ENCODE measurements at regions of chr7 and their contacts with region 1.

Region 1: DNA sequence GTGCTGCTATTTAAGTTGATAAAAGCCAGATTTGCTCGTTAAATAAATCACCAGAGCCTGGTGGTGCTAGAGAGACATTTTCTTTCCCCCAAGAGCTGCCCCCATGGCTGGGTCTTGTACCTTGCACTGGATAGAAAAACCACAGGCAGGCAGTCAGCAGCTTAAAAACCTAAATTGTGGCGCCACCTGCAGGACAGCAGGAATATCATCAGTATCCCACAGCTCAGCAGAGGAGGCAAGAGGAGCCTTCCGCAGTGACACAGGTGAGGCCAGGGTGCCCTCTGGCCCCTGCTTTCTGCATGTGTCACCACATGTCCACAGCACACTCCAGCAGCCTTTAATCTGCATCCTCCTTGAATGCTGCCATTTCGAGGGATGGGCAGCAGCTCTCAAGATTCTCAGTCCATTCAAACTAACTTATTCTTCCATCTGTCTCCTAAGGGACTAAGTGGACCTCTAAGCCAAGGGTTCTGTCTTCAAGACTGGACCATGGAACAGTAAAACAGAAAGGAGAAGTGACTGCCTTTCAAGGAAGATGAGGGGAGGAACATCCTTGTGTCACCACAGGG is 4.5 kb upstream of the PLXNA4 start:
- DNase-seq: peak; percentile 70

Region 2: GRCh38 chr7:132318352-132319318 is 262.2 kb before region 1 on chr7:
- CTCF ChIA-PET with region 1: interaction called, 18 read pairs
- POLR2A ChIA-PET with region 1: no interaction called
- DNase-seq: peak; percentile 89

Region 3: DNA sequence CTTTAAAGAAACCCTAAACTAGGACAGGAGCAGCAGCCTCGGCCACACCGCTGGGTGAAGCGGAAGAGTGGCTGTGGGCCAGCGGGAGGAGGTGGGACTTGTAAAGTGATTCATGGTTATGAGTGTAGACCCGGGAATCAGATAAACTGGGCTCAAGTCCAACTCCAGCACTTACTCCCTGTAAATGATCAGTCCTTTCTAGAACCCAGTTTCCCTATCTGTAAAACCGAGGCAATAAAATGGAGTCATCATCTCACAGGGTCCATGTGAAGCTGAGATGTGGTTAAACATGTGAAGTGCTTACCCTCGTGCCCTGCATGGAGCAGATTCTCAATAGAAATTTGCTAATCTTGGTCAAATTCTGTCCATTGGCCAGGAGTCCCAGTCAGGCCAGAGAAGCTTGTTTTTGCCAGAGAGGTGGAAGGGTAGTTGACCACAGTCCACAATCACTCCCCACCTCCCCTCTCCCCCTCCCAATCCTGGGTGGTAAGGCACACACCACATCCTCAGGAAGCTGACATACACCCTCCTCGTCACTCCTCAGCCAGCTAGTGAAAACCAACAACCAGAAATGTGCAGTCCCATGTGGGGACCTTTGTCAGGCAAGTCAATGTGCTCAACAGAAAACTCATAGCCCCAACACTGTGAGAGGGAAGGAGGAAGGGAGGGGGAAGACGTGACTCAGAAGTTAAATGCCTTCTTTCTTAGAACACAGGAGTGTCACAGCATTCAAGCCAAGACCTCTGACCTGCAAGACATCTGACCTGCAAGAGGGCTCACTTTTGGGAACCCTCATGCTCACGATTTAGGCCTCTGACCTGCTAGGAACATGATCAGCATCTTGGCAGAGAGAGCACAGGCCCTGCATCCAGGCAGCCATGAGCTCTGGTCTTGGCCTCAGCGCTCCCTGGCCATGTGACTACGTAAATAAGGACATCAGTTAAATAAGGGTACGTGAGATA is 149.7 kb before region 1 on chr7:
- CTCF ChIA-PET with region 1: no interaction called
- POLR2A ChIA-PET with region 1: no interaction called
- DNase-seq: peak; percentile 28

Region 4: DNA sequence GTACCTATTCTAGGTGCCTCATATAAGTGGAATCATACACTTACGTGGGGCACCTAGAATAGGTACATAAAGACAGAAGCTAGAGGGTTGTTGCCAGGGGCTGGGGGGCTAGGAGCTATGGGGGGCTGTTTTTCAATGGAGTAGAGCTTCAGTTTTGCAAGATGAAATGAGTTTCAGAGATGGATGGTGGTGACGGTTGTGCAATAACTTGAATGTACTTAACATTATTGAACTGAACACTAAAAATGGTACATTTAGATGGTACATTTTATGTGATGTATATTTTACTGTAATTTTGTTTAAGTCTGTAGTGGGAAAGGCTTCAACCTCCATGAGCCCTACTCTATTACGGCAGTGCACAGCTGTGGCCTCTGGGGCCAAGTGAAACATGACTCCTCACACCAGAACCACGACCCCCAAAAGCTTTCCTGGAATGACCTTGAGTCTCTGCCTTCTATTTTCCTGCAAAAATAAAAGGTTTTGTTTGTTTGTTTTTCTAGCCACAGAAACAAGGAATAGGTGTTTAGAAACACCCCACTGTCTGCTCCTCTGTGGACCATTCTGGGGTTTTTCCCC is 142.8 kb after region 1 on chr7:
- CTCF ChIA-PET with region 1: no interaction called
- POLR2A ChIA-PET with region 1: no interaction called
- DNase-seq: no peak